ENCODE measurements at regions of chr1 and their contacts with region 1.

Region 1: GRCh38 chr1:244231572-244232315 is 180.7 kb downstream of the ZBTB18 start:
- DNase-seq: peak; percentile 41 to 73
- H3K4me3 ChIP-seq: peak overlapping the region; percentile 48; the same call in 1 of the 2 replicates
- H3K27ac ChIP-seq: peak overlapping the region; percentile 68
- H3K4me1 ChIP-seq: peaks cover 44% of the 10 kb centered on the region
- H3K27me3 ChIP-seq: no peaks in the 10 kb centered on the region
- CTCF ChIP-seq: no peak

Region 2: GRCh38 chr1:244065960-244066388 is 165.8 kb before region 1 on chr1:
- CTCF ChIA-PET with region 1: no interaction called
- POLR2A ChIA-PET with region 1: no interaction called
- intact Hi-C with region 1: no loop called
- DNase-seq: no peak
- H3K4me3 ChIP-seq: no peak overlapping the region
- H3K27ac ChIP-seq: no peak overlapping the region
- H3K4me1 ChIP-seq: no peaks in the 10 kb centered on the region
- H3K27me3 ChIP-seq: no peaks in the 10 kb centered on the region
- CTCF ChIP-seq: no peak

Region 3: DNA sequence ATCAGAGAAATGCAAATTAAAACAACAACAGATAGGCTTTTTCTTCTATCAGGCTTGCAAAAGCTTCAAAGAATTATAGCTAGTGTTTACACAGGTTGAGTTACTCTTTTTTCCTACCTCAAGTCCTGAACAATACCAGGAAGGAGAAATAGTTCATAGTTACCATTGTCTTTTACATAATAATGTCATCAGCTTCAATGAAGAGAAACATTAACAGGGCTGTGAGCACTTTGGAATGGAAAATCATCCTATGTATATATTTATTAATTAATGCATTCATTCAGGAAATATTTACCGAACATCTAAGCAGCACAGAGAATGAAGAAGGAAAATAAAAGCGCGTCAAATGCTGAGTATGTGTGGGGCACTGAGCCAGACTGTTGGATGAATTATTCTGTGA is 16.7 kb after region 1 on chr1:
- CTCF ChIA-PET with region 1: no interaction called
- POLR2A ChIA-PET with region 1: interaction called, 10 read pairs
- intact Hi-C with region 1: no loop called
- DNase-seq: no peak
- H3K4me3 ChIP-seq: no peak overlapping the region
- H3K27ac ChIP-seq: no peak overlapping the region
- H3K4me1 ChIP-seq: no peaks in the 10 kb centered on the region
- H3K27me3 ChIP-seq: no peaks in the 10 kb centered on the region
- CTCF ChIP-seq: no peak

Measured in PC-9 (cell line).